A673 (cell line): ENCODE measurements at regions of chr20 and their contacts with region 1.

Region 1: GRCh38 chr20:35359335-35359950 is 52.3 kb downstream of the UQCC1 start:
- DNase-seq: no peak
- H3K4me3 ChIP-seq: no peak overlapping the region
- H3K27ac ChIP-seq: no peak overlapping the region
- H3K4me1 ChIP-seq: no peaks in the 10 kb centered on the region
- H3K27me3 ChIP-seq: no peaks in the 10 kb centered on the region
- CTCF ChIP-seq: no peak

Region 2: DNA sequence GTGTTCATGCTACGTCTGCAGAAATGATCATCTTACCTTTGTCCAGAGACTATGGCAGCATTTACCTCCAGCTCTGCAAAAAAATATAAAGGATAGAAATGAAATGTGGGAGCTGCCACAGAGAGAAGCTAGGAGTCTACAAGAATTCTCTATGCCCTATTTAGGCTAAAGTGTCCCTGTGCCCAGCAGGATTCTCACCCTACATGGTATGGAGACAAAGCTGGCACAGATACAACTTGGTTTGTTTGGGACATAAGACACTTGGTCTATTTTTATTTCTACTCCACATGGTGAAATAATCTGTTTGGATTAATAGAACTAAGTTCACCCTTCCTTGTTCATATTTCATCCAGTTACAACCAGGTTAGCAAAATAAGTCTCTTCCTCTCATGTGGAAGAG is 626.9 kb before region 1 on chr20:
- CTCF ChIA-PET with region 1: no interaction called
- POLR2A ChIA-PET with region 1: interaction called, 10 read pairs
- intact Hi-C with region 1: no loop called
- DNase-seq: no peak
- H3K4me3 ChIP-seq: no peak overlapping the region
- H3K27ac ChIP-seq: no peak overlapping the region
- H3K4me1 ChIP-seq: no peaks in the 10 kb centered on the region
- H3K27me3 ChIP-seq: no peaks in the 10 kb centered on the region
- CTCF ChIP-seq: no peak

Region 3: DNA sequence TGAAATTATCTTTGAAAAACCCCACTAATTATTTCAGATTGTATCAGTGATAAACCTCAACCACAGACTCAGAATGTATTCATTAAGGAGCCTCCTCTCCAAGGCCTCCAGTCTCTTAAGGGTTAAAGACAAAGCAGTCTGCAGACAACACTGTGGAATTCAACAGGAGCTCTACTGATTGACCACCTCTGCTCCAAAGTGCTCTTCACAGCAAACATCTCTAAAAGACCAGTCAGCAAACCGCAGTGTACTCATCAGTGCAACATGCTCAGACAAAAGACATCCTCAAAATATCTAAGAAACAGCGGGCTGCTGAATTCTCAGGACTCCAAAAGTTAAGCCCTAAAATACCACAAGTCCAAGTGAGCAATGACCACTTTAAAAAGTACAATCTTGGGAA is 10.4 kb after region 1 on chr20:
- CTCF ChIA-PET with region 1: no interaction called
- POLR2A ChIA-PET with region 1: no interaction called
- intact Hi-C with region 1: no loop called
- DNase-seq: no peak
- H3K4me3 ChIP-seq: no peak overlapping the region
- H3K27ac ChIP-seq: no peak overlapping the region
- H3K4me1 ChIP-seq: peaks cover 8% of the 10 kb centered on the region
- H3K27me3 ChIP-seq: no peaks in the 10 kb centered on the region
- CTCF ChIP-seq: no peak

Region 4: GRCh38 chr20:35575970-35576623 is 216.7 kb after region 1 on chr20:
- CTCF ChIA-PET with region 1: no interaction called
- POLR2A ChIA-PET with region 1: no interaction called
- intact Hi-C with region 1: no loop called
- DNase-seq: no peak
- H3K4me3 ChIP-seq: no peak overlapping the region
- H3K27ac ChIP-seq: no peak overlapping the region
- H3K4me1 ChIP-seq: no peaks in the 10 kb centered on the region
- H3K27me3 ChIP-seq: no peaks in the 10 kb centered on the region
- CTCF ChIP-seq: no peak